Body of pancreas (tissue), 4 donors: ENCODE measurements at regions of chr5 and their contacts with region 1.

Region 1: DNA sequence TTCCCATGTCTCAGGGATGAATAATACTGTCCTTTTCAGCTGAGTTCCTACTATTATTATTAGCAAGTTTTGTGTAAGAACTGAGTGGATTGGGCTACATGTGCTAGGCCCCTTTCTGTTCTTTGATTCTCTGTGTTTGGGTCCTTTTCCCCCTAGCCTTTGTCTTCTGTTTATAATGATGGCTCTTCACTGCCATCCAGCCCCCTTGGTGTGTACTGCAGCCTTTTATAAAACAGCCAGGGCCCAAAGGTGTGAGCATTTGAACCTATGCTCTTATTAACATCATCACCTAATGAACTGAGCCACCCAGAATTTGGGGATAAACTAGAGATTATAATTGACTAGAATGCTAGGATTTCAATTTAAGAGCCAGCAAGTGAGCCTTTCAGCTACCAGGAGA is 52.6 kb downstream of the PLAC8L1 start:
- DNase-seq: no peak
- ATAC-seq: no peak
- H3K4me3 ChIP-seq: no peak overlapping the region
- H3K27ac ChIP-seq: no peak overlapping the region
- H3K4me1 ChIP-seq: no peaks in the 10 kb centered on the region
- H3K27me3 ChIP-seq: no peaks in the 10 kb centered on the region
- CTCF ChIP-seq: peak in 3 of 7 experiments; percentile 14 to 19 (median 16)
- POLR2A ChIP-seq: no peak

Region 2: GRCh38 chr5:144203750-144204596 is 1848.8 kb before region 1 on chr5:
- intact Hi-C with region 1: loop called (anchors 5 kb)
- DNase-seq: peak; percentile 63 to 74 (median 68)
- ATAC-seq: peak; percentile 65
- H3K4me3 ChIP-seq: no peak overlapping the region
- H3K27ac ChIP-seq: peak overlapping the region in 2 of 4 donors; percentile 55 to 78
- H3K4me1 ChIP-seq: peaks cover 32% of the 10 kb centered on the region
- H3K27me3 ChIP-seq: no peaks in the 10 kb centered on the region
- CTCF ChIP-seq: peak; percentile 80 to 97 (median 92)
- POLR2A ChIP-seq: no peak

Region 3: DNA sequence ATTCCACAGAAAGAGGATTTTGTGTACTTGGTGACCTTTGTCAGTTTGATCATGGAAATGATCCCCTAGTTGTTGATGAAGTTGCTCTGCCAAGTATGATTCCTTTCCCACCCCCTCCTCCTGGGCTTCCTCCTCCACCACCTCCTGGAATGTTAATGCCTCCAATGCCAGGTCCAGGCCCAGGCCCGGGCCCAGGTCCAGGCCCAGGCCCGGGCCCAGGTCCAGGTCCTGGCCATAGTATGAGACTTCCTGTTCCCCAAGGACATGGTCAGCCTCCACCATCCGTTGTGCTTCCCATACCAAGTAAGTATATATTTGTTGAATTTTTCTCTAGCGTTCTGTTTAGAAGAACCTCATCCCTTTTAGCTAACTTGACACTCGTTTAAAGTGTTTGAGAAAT is 180.7 kb after region 1 on chr5:
- intact Hi-C with region 1: no loop called
- DNase-seq: peak; percentile 41 to 65 (median 64)
- ATAC-seq: peak; percentile 65
- H3K4me3 ChIP-seq: no peak overlapping the region
- H3K27ac ChIP-seq: no peak overlapping the region
- H3K4me1 ChIP-seq: peaks cover 14% of the 10 kb centered on the region
- H3K27me3 ChIP-seq: no peaks in the 10 kb centered on the region
- CTCF ChIP-seq: no peak
- POLR2A ChIP-seq: no peak